PC-9 (cell line): ENCODE measurements at regions of chr13 and their contacts with region 1.

Region 1: DNA sequence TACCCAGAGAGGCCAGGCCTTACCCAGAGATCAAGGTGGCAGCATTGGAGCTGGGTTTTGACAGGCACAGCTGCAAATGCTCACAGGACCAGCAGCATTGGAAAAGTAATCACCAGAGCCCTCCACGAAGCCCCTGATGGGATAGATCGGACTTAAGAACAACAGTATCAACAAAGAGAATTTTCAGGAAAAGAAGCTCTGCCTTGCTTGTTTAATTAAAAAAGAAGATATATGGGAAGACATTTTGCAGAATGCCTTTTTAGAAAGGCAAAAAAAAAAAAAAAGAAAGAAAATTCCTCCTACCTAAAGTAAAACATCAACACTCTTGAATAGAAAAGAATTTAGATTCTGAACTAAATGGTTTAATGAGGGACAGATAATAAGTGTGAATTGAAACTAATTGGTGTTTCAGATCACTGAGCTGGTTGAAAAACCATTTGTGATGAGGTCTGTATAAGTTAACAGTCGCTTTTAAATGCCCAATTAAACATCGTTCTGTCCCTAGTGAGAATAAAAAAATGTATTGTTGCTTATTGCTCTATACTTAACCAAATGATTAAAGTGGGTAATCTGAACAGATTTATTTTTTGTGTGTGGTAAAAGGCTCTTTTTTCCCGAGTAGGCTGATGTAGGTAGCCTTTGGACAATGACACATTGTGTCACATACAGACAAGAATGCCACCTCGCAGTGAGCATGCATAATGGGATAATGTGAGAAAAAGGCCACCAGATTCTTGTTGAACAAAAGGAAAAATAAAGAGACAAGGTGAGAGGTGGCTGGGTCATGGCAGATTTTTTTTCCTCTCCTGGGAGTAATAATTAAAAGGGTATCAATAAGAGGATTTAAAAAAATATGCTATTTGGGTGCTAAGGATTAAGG is 93.0 kb upstream of the ARGLU1 start:
- DNase-seq: no peak
- H3K4me3 ChIP-seq: no peak overlapping the region
- H3K27ac ChIP-seq: no peak overlapping the region
- H3K4me1 ChIP-seq: no peaks in the 10 kb centered on the region
- H3K27me3 ChIP-seq: no peaks in the 10 kb centered on the region
- CTCF ChIP-seq: no peak

Region 2: GRCh38 chr13:106709522-106709921 is 48.5 kb after region 1 on chr13:
- CTCF ChIA-PET with region 1: no interaction called
- POLR2A ChIA-PET with region 1: no interaction called
- intact Hi-C with region 1: loop called (anchors 5 kb)
- DNase-seq: no peak
- H3K4me3 ChIP-seq: no peak overlapping the region
- H3K27ac ChIP-seq: no peak overlapping the region
- H3K4me1 ChIP-seq: no peaks in the 10 kb centered on the region
- H3K27me3 ChIP-seq: no peaks in the 10 kb centered on the region
- CTCF ChIP-seq: no peak

Region 3: GRCh38 chr13:106738186-106738678 is 77.2 kb after region 1 on chr13:
- CTCF ChIA-PET with region 1: no interaction called
- POLR2A ChIA-PET with region 1: no interaction called
- intact Hi-C with region 1: no loop called
- DNase-seq: no peak
- H3K4me3 ChIP-seq: no peak overlapping the region
- H3K27ac ChIP-seq: no peak overlapping the region
- H3K4me1 ChIP-seq: no peaks in the 10 kb centered on the region
- H3K27me3 ChIP-seq: no peaks in the 10 kb centered on the region
- CTCF ChIP-seq: no peak